HEK293 (cell line): ENCODE measurements at regions of chr9 and their contacts with region 1.

Region 1: DNA sequence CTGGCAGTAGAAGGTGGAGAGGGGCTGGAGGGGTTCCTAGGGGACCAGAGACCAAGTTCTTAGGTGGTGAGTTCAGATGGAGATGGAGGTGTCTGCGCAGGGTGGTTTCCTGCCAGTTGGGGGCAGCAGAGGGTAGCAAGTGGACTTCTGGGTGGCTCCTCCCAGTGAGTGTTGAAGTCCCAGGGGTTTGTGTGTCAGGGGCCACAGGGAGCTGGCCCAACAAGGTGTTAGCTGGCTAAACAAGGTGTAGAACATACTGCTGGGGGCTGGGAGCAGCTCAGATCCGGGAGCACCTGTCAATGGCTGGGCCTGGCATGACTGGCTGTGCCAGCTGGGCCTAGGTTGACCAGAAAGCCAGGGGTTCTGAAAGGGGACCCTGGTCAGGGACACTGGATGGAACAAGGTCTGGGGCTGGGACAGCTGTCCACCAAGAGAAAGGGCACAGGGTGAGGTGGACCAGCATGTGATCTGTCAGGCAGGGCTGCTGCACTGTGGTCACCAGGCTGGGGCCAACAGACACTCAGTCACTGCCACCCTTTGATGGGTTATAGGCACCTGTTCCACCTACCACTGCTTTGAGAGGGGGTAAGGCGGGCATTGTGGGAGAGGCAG is 35.6 kb downstream of the DAB2IP start:
- H3K4me3 ChIP-seq: no peak overlapping the region
- H3K27ac ChIP-seq: no peak overlapping the region
- H3K4me1 ChIP-seq: no peaks in the 10 kb centered on the region
- CTCF ChIP-seq: peak; percentile 70

Region 2: GRCh38 chr9:121491111-121491510 is 195.9 kb before region 1 on chr9:
- CTCF ChIA-PET with region 1: no interaction called
- POLR2A ChIA-PET with region 1: no interaction called
- H3K4me3 ChIP-seq: no peak overlapping the region
- H3K27ac ChIP-seq: no peak overlapping the region
- H3K4me1 ChIP-seq: no peaks in the 10 kb centered on the region
- CTCF ChIP-seq: no peak

Region 3: DNA sequence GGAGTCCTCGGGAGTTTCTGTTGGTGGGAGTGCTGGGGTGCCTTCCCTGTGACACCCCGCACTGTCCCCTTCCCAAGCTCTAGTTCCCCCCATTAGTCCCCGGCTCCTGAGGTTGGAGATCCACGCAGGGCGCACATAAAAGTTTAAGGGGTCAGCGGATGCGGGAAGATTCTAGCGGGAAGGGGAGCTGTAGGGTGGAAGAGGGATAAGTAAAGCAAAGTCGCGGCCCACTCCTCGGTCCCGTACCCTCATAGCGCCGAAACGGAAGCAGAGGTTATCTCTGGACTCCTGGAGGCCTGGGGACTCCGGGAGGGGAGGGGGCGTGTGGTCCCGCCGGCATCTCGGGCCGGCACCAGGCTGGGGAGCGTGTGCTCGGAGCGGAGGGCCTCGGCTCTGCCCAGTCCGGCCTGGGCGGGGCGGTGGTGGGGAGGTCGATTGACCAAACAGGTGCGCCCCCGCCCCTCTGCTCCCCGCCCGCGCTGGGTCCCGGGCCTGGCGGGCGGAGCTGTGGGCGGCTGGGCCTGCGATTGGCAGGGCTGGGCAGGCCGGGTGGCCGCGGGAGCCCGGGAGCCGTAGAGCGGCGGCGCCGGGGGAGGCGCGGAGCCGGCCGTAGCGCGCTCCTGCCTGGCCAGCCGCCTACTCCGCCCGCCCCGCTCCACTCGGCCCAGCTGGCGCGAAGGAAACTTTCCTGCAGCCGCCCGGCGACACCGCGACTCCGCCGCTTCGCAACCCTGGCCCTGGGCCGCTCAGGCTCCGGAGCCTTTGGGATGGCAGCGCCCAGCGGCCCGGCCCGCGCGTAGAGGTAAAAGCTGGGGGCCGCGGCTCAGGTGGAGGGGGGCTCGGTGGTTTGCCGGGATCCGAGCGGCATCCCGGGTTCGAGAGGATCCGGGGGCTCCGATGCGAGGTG is 87.8 kb before region 1 on chr9:
- CTCF ChIA-PET with region 1: interaction called, 10 read pairs
- POLR2A ChIA-PET with region 1: no interaction called
- H3K4me3 ChIP-seq: peak overlapping the region; percentile 74
- H3K27ac ChIP-seq: peak overlapping the region; percentile 60; the same call in 1 of the 2 replicates
- H3K4me1 ChIP-seq: no peaks in the 10 kb centered on the region
- CTCF ChIP-seq: no peak; the same call in 1 of the 2 replicates

Region 4: DNA sequence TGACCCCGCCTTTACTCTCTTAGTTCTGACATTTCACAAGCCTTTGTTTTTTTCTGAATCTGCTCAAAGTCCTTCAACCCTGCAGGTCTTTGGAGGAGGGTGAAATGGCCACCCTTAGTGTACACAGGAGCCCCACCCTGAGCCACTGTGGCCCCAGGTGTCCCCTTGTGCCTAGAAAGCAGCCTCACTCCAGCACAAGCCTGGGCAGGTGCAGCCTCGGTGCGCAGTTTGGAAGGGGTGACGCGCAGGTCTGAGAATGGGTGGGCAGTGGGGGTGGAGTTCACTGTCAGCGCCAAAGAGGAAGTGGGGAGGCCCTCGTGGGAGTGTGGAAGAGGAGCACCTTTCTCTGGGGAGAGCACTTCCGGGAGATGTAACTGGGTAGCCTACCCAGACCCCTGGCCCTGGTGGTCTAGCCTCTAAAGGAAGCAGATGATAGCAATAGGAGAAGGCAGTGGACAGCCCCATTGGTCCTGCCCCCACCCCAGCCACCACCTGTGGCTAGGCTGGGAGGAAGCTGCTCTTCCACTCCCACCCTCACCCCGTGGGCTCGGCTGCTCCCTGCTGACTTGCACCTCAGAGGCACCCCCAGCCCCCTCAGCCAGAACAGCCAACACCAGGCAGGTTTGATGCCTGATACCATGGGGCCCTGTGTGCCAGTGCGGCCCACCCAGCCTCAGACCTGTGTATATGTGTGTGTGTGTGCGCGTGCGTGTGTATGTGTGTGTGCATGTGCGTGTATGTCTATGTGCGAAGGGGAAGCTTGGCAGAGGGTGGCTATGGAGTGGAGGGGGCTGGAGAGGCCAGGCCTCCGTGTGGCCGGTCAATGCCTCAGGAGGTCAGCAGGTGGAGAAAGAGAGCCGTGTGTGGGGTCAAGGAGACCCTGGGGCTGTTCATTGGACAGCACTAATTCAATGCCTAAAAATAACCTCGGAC is 52.4 kb before region 1 on chr9:
- CTCF ChIA-PET with region 1: interaction called, 14 read pairs
- POLR2A ChIA-PET with region 1: no interaction called
- H3K4me3 ChIP-seq: no peak overlapping the region
- H3K27ac ChIP-seq: no peak overlapping the region
- H3K4me1 ChIP-seq: no peaks in the 10 kb centered on the region
- CTCF ChIP-seq: no peak; the same call in none of the 2 replicates

Region 5: DNA sequence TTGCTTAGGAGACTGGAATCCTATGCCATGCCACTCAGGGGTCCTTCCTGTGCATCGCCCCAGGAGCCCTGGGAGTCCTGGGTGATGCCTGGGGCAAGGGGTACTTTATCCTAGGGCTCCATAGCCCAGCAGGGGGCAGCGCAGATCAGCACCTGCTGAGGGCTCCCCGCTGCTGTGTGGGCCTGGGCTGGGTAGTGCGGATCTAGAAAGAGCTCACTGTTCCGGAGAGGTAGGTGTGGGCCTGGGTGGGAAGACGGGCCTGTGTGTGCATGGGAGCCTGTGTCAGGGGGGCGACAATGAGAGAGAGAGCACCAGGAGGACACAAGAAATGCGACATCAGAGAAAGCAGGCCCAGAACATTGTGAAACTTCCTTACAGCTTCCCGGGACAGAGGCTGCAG is 47.0 kb before region 1 on chr9:
- CTCF ChIA-PET with region 1: interaction called, 14 read pairs
- POLR2A ChIA-PET with region 1: no interaction called
- H3K4me3 ChIP-seq: no peak overlapping the region
- H3K27ac ChIP-seq: no peak overlapping the region
- H3K4me1 ChIP-seq: no peaks in the 10 kb centered on the region
- CTCF ChIP-seq: 0 out of 2 replicates have a peak, but pooled peaks have one; percentile 18

Region 6: GRCh38 chr9:121698627-121699570 is 11.9 kb after region 1 on chr9:
- CTCF ChIA-PET with region 1: interaction called, 118 read pairs
- POLR2A ChIA-PET with region 1: no interaction called
- H3K4me3 ChIP-seq: peak overlapping the region; percentile 57
- H3K27ac ChIP-seq: peak overlapping the region; percentile 46; the same call in 1 of the 2 replicates
- H3K4me1 ChIP-seq: no peaks in the 10 kb centered on the region; the same call in 1 of the 2 replicates
- CTCF ChIP-seq: no peak

Region 7: GRCh38 chr9:121929893-121930875 is 243.1 kb after region 1 on chr9:
- CTCF ChIA-PET with region 1: interaction called, 17 read pairs
- POLR2A ChIA-PET with region 1: no interaction called
- H3K4me3 ChIP-seq: no peak overlapping the region
- H3K27ac ChIP-seq: no peak overlapping the region
- H3K4me1 ChIP-seq: no peaks in the 10 kb centered on the region
- CTCF ChIP-seq: no peak

Region 8: DNA sequence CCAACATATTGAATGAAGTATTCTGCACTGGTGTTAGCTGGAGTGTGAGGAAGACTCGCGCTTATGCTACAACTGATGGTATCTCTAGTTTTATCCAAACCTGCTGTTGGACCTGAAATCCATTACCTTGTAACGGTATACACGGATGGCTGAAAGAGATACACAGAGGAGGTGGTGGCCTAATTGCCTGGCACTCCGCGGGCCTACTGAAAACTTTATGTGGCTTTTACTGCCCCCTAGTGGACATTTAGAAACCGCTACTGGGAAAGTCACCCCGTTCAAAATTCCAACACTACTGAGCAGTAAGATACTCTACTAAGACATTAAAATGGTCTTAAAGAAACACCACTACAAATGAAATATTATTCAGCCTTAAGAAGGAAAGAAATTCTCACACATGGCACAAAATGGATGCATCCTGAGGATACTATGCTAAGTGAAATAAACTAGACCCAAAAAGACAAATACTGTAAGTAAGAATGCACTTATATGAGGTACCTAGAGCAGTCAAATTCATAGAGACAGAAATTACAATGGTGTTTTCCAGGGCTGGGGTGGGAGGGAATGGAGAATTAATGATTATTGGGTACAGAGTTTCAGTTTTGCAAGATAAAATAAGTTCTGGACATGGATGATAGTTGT is 305.7 kb after region 1 on chr9:
- CTCF ChIA-PET with region 1: interaction called, 14 read pairs
- POLR2A ChIA-PET with region 1: no interaction called
- H3K4me3 ChIP-seq: no peak overlapping the region
- H3K27ac ChIP-seq: no peak overlapping the region
- H3K4me1 ChIP-seq: no peaks in the 10 kb centered on the region
- CTCF ChIP-seq: no peak